ENCODE measurements at regions of chr7 and their contacts with region 1.

Region 1: DNA sequence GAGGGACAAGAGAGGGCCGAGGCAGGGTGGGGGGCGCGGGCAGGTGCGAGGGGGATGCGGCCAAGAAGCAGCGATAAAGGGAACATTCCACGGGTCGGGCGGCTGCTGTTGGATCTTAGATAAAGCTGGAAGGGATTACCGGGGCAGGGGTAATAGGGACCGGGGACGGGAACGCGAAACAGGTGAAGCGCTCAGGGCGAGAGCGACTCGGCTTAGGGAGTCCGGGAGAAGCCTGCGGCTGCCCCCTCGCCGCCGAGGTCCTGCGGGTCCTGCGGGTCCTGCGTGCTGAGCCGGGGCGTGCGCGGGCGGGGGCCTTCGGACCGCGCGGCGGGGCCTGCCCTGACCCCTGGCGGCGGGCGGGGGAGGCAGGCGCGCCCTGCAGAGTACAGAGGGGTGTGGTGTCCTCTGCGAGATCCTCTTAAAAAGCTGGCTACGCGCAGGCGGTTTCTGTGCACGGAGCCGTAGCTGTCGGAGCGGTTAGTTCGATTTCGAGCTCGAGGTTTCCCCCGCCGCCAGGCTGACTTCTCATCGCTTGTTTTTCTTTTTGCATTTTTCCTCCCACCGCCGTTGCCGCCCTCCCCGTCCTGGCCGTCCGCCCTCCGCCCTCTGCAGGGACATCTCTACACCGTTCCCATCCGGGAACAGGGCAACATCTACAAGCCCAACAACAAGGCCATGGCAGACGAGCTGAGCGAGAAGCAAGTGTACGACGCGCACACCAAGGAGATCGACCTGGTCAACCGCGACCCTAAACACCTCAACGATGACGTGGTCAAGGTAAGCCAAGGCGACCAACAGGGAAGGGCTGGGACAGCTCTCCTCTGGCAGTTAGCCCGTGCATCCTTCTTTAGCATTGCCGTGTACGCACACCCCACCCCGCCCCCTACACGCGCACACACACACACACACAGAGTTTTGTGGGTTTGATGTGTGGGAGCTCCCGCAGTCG is 1.4 kb downstream of the CAV1 start:
- DNase-seq: peak; percentile 64
- H3K4me3 ChIP-seq: peak overlapping the region; percentile 97
- H3K27ac ChIP-seq: peak overlapping the region; percentile 98
- H3K27me3 ChIP-seq: no peaks in the 10 kb centered on the region
- CTCF ChIP-seq: peak; percentile 51

Region 2: GRCh38 chr7:115379321-115379720 is 1146.9 kb before region 1 on chr7:
- CTCF ChIA-PET with region 1: no interaction called
- POLR2A ChIA-PET with region 1: no interaction called
- DNase-seq: no peak
- H3K4me3 ChIP-seq: no peak overlapping the region
- H3K27ac ChIP-seq: no peak overlapping the region
- H3K27me3 ChIP-seq: no peaks in the 10 kb centered on the region
- CTCF ChIP-seq: no peak

Region 3: GRCh38 chr7:116242178-116242577 is 284.0 kb before region 1 on chr7:
- CTCF ChIA-PET with region 1: interaction called, 25 read pairs
- POLR2A ChIA-PET with region 1: no interaction called
- DNase-seq: no peak
- H3K4me3 ChIP-seq: no peak overlapping the region
- H3K27ac ChIP-seq: no peak overlapping the region
- H3K27me3 ChIP-seq: no peaks in the 10 kb centered on the region
- CTCF ChIP-seq: peak; percentile 44

Region 4: DNA sequence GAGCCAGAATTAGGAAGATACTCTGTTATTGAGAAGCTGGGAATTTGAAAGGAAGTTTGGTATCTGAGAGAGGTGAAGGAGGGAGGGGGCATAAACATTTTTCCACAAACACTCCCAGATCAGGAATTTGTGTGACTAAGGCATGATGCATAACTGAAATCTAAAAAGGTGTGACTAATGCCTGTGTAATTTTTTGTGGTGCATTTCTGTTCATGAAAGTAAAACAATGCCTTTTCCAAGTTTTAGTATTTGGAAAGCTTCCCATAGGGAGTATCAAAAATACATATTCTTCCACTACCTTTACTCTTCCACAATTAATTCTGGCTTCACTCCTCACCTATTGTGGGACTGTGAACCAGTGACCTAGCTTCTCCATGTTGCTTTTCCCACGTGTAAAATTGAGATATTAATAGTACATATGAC is 83.1 kb before region 1 on chr7:
- CTCF ChIA-PET with region 1: interaction called, 11 read pairs
- POLR2A ChIA-PET with region 1: interaction called, 6 read pairs
- DNase-seq: peak; percentile 82
- H3K4me3 ChIP-seq: no peak overlapping the region
- H3K27ac ChIP-seq: peak overlapping the region; percentile 55
- H3K27me3 ChIP-seq: no peaks in the 10 kb centered on the region
- CTCF ChIP-seq: no peak

Region 5: DNA sequence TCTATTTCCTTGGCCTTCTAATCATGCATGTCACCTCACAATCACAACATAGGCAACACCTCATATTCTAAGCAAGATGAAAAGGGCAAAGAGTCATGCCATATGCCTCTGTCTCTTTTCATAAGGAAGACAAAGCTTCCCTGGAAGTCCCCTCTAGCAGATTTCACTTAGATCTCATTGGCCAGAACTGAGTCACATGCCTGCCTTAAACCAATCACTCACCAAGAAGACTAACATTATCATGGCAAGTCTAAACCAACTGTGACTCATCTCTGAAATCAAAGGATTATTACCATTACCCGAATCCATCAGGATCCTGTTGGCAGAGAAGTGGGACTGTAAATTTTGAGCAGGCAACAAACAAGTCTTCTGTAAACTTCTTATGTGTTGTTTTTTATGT is 26.4 kb after region 1 on chr7:
- CTCF ChIA-PET with region 1: interaction called, 11 read pairs
- POLR2A ChIA-PET with region 1: interaction called, 4 read pairs
- DNase-seq: no peak
- H3K4me3 ChIP-seq: no peak overlapping the region
- H3K27ac ChIP-seq: no peak overlapping the region
- H3K27me3 ChIP-seq: no peaks in the 10 kb centered on the region
- CTCF ChIP-seq: no peak

Region 6: GRCh38 chr7:116582806-116583444 is 56.7 kb after region 1 on chr7:
- CTCF ChIA-PET with region 1: interaction called, 15 read pairs
- POLR2A ChIA-PET with region 1: interaction called, 18 read pairs
- DNase-seq: no peak
- H3K4me3 ChIP-seq: no peak overlapping the region
- H3K27ac ChIP-seq: peak overlapping the region; percentile 69
- H3K27me3 ChIP-seq: no peaks in the 10 kb centered on the region
- CTCF ChIP-seq: no peak

Region 7: GRCh38 chr7:116679500-116679899 is 153.3 kb after region 1 on chr7:
- CTCF ChIA-PET with region 1: no interaction called
- POLR2A ChIA-PET with region 1: no interaction called
- DNase-seq: no peak
- H3K4me3 ChIP-seq: no peak overlapping the region
- H3K27ac ChIP-seq: no peak overlapping the region
- H3K27me3 ChIP-seq: no peaks in the 10 kb centered on the region
- CTCF ChIP-seq: no peak

Region 8: GRCh38 chr7:116776610-116777289 is 250.6 kb after region 1 on chr7:
- CTCF ChIA-PET with region 1: no interaction called
- POLR2A ChIA-PET with region 1: no interaction called
- DNase-seq: no peak
- H3K4me3 ChIP-seq: no peak overlapping the region
- H3K27ac ChIP-seq: peak overlapping the region; percentile 59
- H3K27me3 ChIP-seq: no peaks in the 10 kb centered on the region
- CTCF ChIP-seq: no peak

Measured in AG04450 (cell line).